ENCODE measurements at regions of chr21 and their contacts with region 1.

Region 1: DNA sequence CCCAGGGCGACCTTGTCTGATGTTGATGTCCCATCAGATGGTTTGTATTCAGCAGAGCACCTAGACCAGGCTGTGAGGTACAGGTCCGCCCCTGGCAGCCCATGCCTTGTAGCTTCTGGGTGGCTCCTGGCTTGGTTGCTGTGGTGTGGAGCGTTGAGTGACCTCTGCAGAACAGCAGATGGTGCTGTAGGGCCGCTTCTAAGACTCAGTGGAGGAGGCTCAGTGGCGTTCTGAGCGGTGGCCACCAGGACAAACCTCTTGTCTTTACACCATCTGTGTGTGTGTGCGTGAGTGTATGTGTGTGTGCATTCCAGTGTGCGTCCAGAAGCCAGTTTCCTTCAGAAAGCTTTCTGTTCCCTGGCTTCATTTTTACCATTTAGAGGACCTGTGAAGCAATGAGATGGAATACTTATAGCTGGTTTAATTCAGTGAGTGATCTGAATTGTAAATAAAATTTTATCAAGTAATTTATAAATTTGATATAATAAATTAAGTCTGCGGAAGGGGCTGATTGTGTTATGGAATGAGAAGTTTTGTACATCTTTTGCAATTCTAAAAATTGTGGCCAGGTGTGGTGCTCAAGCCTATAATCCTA is 66.1 kb downstream of the ADARB1 start:
- DNase-seq: peak; percentile 77 to 87
- ATAC-seq: peak; percentile 77 to 87 (median 82)
- H3K4me3 ChIP-seq: no peak overlapping the region
- H3K27ac ChIP-seq: no peak overlapping the region
- H3K4me1 ChIP-seq: peaks cover 35% of the 10 kb centered on the region
- H3K27me3 ChIP-seq: no peaks in the 10 kb centered on the region
- CTCF ChIP-seq: peak; percentile 85

Region 2: GRCh38 chr21:44338971-44339910 is 801.2 kb before region 1 on chr21 and contains the start of gene CFAP410:
- intact Hi-C with region 1: loop called in 1 of 2 experiments (anchors 10 kb)
- DNase-seq: peak; percentile 96 to 98
- ATAC-seq: peak; percentile 93 to 96 (median 95)
- H3K4me3 ChIP-seq: peak within 1 kb of the TSS; percentile 99
- H3K27ac ChIP-seq: peak within 1 kb of the TSS; percentile 98
- H3K4me1 ChIP-seq: peaks cover 14% of the 10 kb centered on the region
- H3K27me3 ChIP-seq: no peaks in the 10 kb centered on the region
- CTCF ChIP-seq: no peak
- total RNA-seq, gene CFAP410: 8.3 to 10.5 (median 9.7) TPM

Region 3: DNA sequence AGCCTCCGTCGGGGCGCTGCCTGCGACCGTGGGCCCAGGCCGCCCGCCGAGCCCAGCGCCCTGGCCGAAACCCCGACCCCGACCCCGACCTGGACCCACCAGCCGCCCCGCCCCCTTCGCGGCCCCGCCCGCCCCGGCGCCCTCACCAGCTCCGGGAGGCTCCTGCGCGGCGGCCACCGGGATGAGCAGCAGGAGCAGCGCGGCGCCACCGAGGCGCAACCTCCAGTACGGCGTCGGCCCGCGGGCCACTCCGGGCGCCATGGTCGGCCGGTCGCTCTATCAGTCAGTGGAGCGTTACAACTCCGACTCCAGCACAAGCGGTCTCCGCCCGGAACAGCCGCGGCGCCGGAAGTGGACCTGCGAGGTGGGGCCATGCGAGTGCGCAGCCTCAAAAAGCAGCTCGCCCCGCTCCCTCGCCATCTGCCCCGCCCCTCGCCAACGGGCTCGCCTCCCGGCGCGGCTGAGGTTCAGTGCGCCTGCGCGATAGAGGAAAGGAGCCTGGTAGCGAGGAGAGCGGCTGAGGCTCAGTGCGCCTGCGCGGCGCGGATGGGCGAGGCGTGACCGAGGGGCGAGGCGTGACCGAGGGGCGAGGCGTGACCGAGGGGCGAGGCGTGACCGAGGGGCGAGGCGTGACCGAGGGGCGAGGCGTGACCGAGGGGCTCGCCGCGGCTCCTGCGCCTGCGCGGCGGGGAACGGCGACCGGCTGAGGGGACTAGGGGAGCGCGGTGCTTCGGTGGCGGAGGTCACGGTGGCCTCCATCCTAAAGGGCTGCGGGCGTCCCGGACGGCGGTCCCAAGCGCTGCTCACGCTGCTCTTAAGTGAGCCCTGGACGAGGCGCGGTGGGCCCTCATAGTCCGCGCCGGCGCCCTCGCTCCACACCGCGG is 266.8 kb before region 1 on chr21 and contains the start of gene PTTG1IP:
- intact Hi-C with region 1: loop called in 1 of 2 experiments (anchors 10 kb)
- DNase-seq: peak; percentile 99 to 100
- ATAC-seq: peak; percentile 76 to 82 (median 80)
- H3K4me3 ChIP-seq: peak within 1 kb of the TSS; percentile 90
- H3K27ac ChIP-seq: peak within 1 kb of the TSS; percentile 97
- H3K4me1 ChIP-seq: peaks cover 49% of the 10 kb centered on the region
- H3K27me3 ChIP-seq: no peaks in the 10 kb centered on the region
- CTCF ChIP-seq: no peak
- total RNA-seq, gene PTTG1IP: 49.6 to 72.1 (median 66.5) TPM

Region 4: DNA sequence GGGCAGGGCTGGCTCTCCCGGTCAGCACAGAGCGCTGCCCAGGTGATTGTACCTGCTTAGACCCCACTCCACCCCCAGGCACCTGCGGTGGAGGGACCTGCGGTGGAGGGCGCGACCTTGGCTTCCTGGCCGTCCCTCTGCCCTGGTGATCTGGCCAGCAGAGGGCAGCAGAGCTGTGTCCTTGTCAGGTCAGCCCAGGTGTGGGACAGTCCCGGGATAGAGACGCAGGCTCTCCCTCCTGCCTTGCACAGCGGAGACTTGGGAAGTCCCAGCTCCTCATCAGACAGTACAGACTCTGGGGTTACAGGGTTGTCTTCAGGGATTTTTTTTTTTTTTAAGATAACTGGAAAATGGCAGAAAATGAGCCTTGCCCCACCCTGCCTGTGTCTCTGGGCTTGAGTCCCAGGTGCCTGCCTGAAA is 190.7 kb before region 1 on chr21:
- intact Hi-C with region 1: loop called in 1 of 2 experiments (anchors 2 kb)
- DNase-seq: peak; percentile 90 to 95
- ATAC-seq: peak; percentile 45 to 63 (median 53)
- H3K4me3 ChIP-seq: no peak overlapping the region
- H3K27ac ChIP-seq: peak overlapping the region; percentile 55
- H3K4me1 ChIP-seq: peaks cover 78% of the 10 kb centered on the region
- H3K27me3 ChIP-seq: no peaks in the 10 kb centered on the region
- CTCF ChIP-seq: peak; percentile 97

Region 5: DNA sequence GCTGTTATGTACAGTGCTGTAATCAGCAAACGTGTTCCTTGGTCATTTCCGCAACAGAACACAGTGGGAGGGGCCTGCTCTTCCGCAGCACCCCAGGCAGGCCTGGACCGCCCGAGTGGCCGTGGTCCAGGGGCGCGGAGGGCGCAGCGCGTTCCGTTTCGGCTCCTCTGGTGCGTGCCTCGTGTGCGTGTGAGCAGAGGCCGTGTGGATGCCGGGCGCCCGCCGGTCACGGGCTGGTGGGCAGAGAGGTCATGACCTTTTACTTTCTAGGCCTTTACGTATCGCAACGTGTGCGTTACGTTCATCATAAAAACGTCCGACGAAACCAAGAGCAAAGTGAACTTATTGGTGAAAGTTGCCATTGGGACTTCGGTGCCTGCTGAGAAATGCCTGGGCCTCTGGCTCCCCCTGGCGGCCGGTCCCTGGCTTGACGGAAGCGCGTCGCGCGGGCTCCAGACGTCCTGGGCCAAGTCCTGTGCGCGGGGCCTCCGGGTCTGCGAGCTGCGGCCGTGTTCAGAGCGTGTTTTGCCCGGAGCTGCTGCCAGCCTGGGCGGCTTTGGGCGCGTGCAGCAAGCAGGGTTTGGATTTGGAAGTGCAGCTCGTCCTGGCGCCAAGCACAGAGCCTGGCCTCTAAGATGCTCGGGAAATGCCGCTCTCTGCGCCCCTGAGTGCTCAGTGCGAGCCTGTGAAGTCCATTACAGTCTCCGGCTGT is 298.9 kb after region 1 on chr21:
- intact Hi-C with region 1: loop called (anchors 1 to 5 kb)
- DNase-seq: peak; percentile 84 to 92
- ATAC-seq: peak; percentile 83 to 96 (median 88)
- H3K4me3 ChIP-seq: peak overlapping the region; percentile 60
- H3K27ac ChIP-seq: peak overlapping the region; percentile 64
- H3K4me1 ChIP-seq: peaks cover 11% of the 10 kb centered on the region
- H3K27me3 ChIP-seq: peaks cover 0 to 28% (median 0%) of the 10 kb centered on the region in 3 donors
- CTCF ChIP-seq: peak; percentile 98